ENCODE measurements at regions of chr1 and their contacts with region 1.

Region 1: GRCh38 chr1:161192476-161193465 is 6.1 kb downstream of the ADAMTS4 start:
- DNase-seq: peak; percentile 37
- H3K4me3 ChIP-seq: no peak overlapping the region
- H3K27ac ChIP-seq: no peak overlapping the region
- H3K27me3 ChIP-seq: no peaks in the 10 kb centered on the region
- CTCF ChIP-seq: peak; percentile 92

Region 2: GRCh38 chr1:161165742-161166668 is 26.8 kb before region 1 on chr1 and contains the start of gene PPOX:
- CTCF ChIA-PET with region 1: interaction called, 13 read pairs
- POLR2A ChIA-PET with region 1: no interaction called
- DNase-seq: peak; percentile 93
- H3K4me3 ChIP-seq: peak within 1 kb of the TSS; percentile 86
- H3K27ac ChIP-seq: peak within 1 kb of the TSS; percentile 93
- H3K27me3 ChIP-seq: no peaks in the 10 kb centered on the region
- CTCF ChIP-seq: peak; percentile 55
- polyA plus RNA-seq, gene PPOX: 9.7 and 9.8 TPM in 2 replicates

Region 3: GRCh38 chr1:161177112-161177935 is 15.4 kb before region 1 on chr1 and contains the start of gene B4GALT3:
- CTCF ChIA-PET with region 1: interaction called, 42 read pairs
- POLR2A ChIA-PET with region 1: no interaction called
- DNase-seq: no peak
- H3K4me3 ChIP-seq: peak within 1 kb of the TSS; percentile 98
- H3K27ac ChIP-seq: peak within 1 kb of the TSS; percentile 47
- H3K27me3 ChIP-seq: no peaks in the 10 kb centered on the region
- CTCF ChIP-seq: no peak
- polyA plus RNA-seq, gene B4GALT3: 21.8 and 24.7 TPM in 2 replicates

Region 4: DNA sequence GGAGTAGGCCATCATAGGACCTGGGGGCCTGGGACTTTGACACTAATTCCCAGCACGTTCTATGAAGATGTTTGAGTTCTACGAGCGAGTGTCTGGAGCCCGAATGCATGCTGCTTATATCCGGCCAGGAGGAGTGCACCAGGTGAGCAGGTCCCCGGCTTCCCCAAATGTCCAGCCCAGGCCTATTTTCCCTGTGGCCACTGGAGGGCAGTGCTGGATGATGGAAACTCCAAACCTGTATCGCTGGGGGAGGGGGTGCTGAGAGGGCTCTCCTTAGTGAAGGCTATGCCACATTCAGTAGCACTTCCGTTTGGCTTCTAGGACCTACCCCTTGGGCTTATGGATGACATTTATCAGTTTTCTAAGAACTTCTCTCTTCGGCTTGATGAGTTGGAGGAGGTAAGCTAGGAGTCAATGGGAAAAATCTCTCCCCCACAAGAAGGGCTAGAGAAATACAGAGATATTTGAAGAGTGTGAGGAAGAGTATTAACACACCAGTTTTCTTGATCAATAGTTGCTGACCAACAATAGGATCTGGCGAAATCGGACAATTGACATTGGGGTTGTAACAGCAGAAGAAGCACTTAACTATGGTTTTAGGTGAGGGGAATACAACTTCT is 17.1 kb after region 1 on chr1:
- CTCF ChIA-PET with region 1: interaction called, 62 read pairs
- POLR2A ChIA-PET with region 1: interaction called, 5 read pairs
- DNase-seq: no peak
- H3K4me3 ChIP-seq: no peak overlapping the region
- H3K27ac ChIP-seq: no peak overlapping the region
- H3K27me3 ChIP-seq: no peaks in the 10 kb centered on the region
- CTCF ChIP-seq: peak; percentile 93

Region 5: DNA sequence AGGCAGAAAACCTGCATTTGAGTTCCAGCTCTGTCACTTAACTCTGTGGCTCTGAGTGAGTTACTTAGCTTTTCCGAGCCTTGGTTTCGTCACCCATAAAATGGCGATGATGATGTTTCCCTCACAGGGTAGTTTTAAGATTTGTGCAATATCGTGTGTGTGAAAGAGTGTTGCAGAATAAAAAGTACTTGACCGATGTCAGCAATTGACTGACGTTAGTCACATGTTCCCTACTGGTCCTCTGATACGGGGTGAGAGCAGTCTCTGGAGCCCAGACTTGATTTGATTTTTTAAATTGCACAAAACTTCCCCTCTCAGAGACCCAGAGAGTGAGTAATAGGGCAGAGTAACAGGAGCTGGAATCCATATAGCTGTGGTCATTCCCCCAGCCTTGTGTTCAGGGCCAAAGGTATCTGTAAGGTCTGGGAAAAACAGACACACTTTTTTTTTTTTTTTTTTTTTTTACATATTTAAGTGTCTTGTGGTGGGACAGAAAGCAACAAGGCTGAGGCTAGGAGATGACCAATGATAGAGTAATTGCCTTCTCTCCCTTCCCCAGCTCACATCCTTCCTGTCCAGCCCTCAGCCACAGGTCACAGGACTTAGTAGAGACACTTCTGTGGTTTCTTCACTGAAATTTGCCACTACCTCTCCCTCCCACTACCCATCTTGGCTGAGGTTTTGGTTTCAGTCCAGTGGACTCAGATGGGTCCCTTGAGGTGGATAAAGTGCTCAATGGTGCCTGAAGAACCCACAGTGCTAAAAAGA is 24.4 kb after region 1 on chr1:
- CTCF ChIA-PET with region 1: interaction called, 13 read pairs
- POLR2A ChIA-PET with region 1: no interaction called
- DNase-seq: no peak
- H3K4me3 ChIP-seq: no peak overlapping the region
- H3K27ac ChIP-seq: peak overlapping the region; percentile 69
- H3K27me3 ChIP-seq: no peaks in the 10 kb centered on the region
- CTCF ChIP-seq: no peak

Region 6: DNA sequence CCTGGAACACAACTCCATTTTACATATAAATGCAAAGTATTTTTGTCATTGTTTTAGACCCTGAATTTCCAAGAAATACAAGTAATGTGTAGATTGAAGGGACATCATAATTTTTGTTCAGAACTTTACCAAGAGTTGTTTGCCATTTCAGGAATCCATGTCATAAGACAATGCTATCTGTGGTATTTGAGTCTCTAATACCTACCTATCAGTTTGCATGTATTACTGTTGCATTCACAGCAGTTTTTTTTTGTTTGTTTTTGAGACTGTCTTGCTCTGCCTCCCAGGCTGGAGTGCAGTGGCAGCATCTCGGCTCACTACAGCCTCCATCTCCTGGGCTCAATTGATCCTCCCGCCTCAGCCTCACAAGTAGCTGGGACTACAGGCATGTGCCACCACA is 99.9 kb after region 1 on chr1:
- CTCF ChIA-PET with region 1: interaction called, 23 read pairs
- POLR2A ChIA-PET with region 1: no interaction called
- DNase-seq: no peak
- H3K4me3 ChIP-seq: no peak overlapping the region
- H3K27ac ChIP-seq: no peak overlapping the region
- H3K27me3 ChIP-seq: no peaks in the 10 kb centered on the region
- CTCF ChIP-seq: no peak

Region 7: GRCh38 chr1:161374373-161374772 is 181.6 kb after region 1 on chr1:
- CTCF ChIA-PET with region 1: interaction called, 17 read pairs
- POLR2A ChIA-PET with region 1: no interaction called
- DNase-seq: no peak
- H3K4me3 ChIP-seq: no peak overlapping the region
- H3K27ac ChIP-seq: no peak overlapping the region
- H3K27me3 ChIP-seq: no peaks in the 10 kb centered on the region
- CTCF ChIP-seq: peak; percentile 34

Measured in AG04450 (cell line).